Lower leg skin (tissue), 4 donors: ENCODE measurements at regions of chr4 and their contacts with region 1.

Region 1: DNA sequence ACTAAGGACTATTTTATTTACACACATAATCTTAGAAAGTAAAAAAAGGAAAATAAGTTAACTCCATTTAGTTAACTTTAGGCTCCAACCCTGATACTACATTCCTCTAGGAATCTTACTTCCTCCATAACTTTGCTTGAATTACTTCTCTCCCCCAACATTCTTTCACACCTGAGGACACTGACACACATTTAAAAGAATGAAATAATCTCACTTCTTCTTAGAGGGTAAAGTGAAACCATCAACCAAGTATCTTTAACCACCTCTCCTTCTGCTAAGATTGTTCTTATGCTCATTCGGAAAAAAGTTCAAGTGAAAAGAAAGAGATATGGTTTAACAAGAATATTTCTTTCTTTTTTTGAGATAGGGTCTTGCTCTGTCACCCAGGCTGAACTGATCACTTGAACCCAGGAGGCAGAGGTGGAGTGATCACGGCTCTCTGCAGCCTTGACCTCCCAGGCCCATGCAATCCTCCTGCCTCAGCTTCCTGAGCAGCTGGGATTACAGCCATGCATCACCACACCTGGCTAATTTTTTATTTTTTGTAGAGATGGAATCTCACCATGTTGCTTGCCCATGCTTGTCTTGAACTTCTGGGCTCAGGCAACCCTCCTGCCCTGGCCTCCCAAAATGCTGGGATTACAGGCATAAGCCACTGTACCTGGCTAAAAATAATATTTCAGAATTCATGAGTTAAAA is 28.5 kb downstream of the SLC25A4 start:
- DNase-seq: no peak
- H3K4me3 ChIP-seq: no peak overlapping the region
- CTCF ChIP-seq: no peak
- POLR2A ChIP-seq: no peak

Region 2: DNA sequence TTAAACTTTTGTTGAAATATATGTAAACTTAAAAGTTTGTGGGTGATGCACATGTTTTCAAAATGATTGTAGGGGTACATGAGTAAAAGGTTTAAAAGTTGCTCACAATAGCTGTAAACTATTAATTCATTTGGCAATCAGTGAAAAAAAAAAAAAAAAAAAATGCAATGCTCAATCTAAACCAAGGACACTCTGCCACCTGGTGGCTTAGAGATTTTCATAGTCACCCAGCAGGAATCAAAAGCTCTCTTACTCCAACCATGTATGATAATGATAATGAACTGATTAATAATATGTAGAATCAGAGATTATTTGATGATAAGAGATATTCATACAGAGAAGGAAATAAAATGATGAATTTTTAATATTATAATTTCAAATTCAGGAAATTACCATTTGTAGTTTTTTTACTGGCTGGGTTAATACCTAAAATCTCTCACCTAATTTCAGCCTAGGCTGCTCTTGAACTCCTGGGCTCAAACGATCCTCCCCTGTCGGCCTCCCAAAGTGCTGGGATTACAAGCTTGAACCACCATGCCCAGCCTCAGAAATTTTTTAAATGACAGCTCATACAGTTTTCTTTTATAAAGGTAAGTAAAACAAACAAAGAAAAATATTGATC is 75.4 kb before region 1 on chr4:
- intact Hi-C with region 1: no loop called
- DNase-seq: no peak
- H3K4me3 ChIP-seq: no peak overlapping the region
- CTCF ChIP-seq: no peak
- POLR2A ChIP-seq: no peak

Region 3: GRCh38 chr4:185576962-185577950 is 405.7 kb after region 1 on chr4:
- intact Hi-C with region 1: no loop called
- DNase-seq: no peak
- H3K4me3 ChIP-seq: no peak overlapping the region
- CTCF ChIP-seq: no peak
- POLR2A ChIP-seq: no peak

Region 4: DNA sequence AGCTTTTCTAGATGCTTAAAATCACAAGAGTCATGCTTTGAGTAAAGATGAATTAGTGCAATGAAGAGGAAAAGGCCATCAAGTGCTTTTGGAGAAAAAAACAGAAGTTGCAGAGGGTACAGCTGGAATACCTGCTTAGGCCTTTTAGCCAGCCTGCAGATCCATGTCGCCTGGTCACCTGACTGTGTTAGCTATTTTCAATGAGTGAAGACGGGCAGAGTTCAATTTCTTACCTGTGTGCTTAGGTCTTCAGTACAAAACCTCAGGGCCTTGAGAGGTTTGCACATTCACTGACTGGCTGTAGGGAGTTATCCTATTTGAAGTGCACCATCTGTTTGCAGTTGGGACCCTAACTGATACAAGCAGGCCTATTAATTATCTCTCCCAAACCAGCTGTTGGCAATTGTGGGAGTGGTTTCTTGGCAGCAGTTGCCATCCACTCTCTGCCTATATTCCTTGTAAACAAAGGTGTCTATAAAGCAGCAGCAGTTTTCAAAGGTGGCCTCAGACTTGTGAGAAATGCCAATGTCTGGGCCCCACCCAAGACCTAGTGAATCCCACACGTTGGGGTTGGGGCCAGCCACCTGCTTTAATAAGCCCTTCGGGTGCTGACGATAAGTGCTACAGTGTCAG is 1568.4 kb after region 1 on chr4:
- intact Hi-C with region 1: loop called (anchors 10 kb)
- DNase-seq: no peak
- H3K4me3 ChIP-seq: no peak overlapping the region
- CTCF ChIP-seq: no peak
- POLR2A ChIP-seq: no peak